Activated T-helper 1 cell treated with anti-CD3 and anti-CD28 coated beads, Interleukin-12 subunit alpha, Interleukin-12 subunit beta, Interleukin-2, Interleukin-4 antibody, amounts not matched to agents 30 ng/mL and 10 ng/mL and 1 ng/mL, durations not matched to agents 14 hours and 24 hours and 36 hours (primary cell): ENCODE measurements at regions of chr18 and their contacts with region 1.

Region 1: GRCh38 chr18:62844850-62845643 is 129.7 kb downstream of the PHLPP1 start:
- DNase-seq: no peak
- H3K4me3 Mint-ChIP-seq: peak overlapping the region; percentile 70
- H3K27ac Mint-ChIP-seq: peak overlapping the region; percentile 82
- H3K4me1 Mint-ChIP-seq: peaks cover 51% of the 10 kb centered on the region
- H3K27me3 Mint-ChIP-seq: no peaks in the 10 kb centered on the region

Region 2: DNA sequence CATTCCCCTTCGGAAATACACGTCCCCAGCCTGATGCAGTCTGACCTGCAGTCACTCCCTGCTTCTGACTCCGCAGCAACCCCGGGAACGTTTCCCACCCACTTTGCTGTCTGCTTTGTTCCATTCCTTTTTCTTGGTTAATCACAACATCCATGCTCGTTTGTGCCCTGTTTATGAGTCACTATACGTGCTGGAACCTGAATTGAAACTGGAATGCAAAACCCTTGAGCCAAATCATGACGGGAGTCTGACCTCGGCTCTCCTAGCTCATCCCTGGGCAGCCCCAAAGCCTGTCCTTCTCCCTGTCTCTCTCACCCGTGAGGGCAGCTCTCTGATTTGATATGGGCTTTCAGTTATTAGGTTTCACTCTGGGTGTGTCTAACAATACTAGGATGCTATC is 895.1 kb before region 1 on chr18:
- intact Hi-C with region 1: loop called (anchors 5 kb)
- DNase-seq: no peak
- H3K4me3 Mint-ChIP-seq: no peak overlapping the region
- H3K27ac Mint-ChIP-seq: no peak overlapping the region
- H3K4me1 Mint-ChIP-seq: peaks cover 46% of the 10 kb centered on the region
- H3K27me3 Mint-ChIP-seq: peaks cover 34% of the 10 kb centered on the region

Region 3: DNA sequence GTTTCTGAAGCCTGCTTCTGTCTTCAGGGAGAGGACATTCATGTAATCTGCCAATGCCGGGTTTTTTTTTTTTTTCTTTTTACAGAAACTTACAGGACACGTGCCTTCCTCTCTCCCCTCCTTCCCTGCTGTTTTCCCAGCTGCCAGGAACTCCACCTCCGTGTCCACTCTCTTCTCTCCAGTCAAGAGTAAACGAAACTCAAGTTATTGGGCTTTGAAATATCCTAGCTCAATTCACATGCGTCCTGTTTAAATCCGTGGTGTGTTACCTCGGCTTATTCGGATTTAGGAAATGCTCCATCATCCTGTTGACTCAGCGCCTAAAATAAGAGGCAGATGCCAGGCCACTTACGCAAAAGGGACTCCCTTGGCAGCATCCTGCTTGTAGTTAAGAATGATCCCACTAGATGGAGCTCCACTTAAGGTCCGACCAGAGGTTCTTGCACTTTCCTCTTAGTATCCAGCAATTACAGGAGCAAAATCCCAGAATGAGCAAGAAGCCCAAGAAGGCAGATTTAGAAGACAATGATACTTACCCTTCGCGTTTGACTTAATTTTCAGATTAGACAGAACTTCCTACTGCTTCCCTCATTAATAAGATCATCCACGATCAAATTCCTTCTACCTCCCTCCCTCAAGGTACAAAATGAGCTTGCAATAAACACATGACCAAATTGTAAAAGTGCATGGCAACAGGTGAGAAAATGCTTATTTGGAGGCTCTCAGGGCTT is 419.4 kb before region 1 on chr18:
- intact Hi-C with region 1: loop called (anchors 1 kb)
- DNase-seq: peak; percentile 56
- H3K4me3 Mint-ChIP-seq: peak overlapping the region; percentile 19
- H3K27ac Mint-ChIP-seq: peak overlapping the region; percentile 69
- H3K4me1 Mint-ChIP-seq: peaks cover 44% of the 10 kb centered on the region
- H3K27me3 Mint-ChIP-seq: no peaks in the 10 kb centered on the region

Region 4: DNA sequence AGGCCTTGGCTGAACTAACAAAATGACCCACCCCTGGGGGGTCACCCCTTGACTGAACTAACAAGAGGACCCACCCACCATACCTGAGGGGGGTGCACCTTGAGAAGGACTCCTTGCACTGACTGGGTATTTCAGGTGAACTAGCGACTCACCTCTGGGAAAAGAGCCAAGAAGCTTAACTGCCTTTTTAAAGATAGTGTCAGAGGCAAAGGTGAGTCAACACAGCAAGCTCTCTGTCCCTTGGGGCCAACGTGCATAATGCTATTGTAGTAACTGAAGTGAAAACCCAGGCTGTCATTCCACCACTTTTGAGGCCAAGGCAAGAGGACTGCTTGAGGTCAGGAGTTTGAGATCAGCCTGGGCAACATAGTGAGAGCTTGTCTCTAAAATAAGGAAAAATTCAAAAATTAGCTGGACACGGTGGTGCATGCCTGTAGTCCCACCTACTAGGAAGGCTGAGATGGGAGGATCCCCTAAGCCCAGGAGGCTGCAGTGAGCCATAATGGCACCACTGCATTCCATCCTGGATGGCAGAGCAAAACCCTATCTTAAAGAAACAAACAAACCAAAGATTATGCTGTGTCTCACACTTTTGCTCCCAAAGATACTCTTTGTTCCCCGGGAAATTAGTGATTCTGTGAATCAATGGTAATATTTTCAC is 358.6 kb before region 1 on chr18:
- intact Hi-C with region 1: no loop called
- DNase-seq: no peak
- H3K4me3 Mint-ChIP-seq: no peak overlapping the region
- H3K27ac Mint-ChIP-seq: no peak overlapping the region
- H3K4me1 Mint-ChIP-seq: no peaks in the 10 kb centered on the region
- H3K27me3 Mint-ChIP-seq: peaks cover 14% of the 10 kb centered on the region

Region 5: GRCh38 chr18:62868645-62869044 is 23.6 kb after region 1 on chr18:
- intact Hi-C with region 1: loop called (anchors 1 kb)
- DNase-seq: no peak
- H3K4me3 Mint-ChIP-seq: no peak overlapping the region
- H3K27ac Mint-ChIP-seq: peak overlapping the region; percentile 87
- H3K4me1 Mint-ChIP-seq: peaks cover 38% of the 10 kb centered on the region
- H3K27me3 Mint-ChIP-seq: no peaks in the 10 kb centered on the region

Region 6: GRCh38 chr18:63161761-63162195 is 316.7 kb after region 1 on chr18:
- intact Hi-C with region 1: loop called (anchors 1 kb)
- DNase-seq: peak; percentile 80
- H3K4me3 Mint-ChIP-seq: peak overlapping the region; percentile 83
- H3K27ac Mint-ChIP-seq: peak overlapping the region; percentile 99
- H3K4me1 Mint-ChIP-seq: peaks cover 92% of the 10 kb centered on the region
- H3K27me3 Mint-ChIP-seq: no peaks in the 10 kb centered on the region

Region 7: GRCh38 chr18:63422087-63422809 is 577.2 kb after region 1 on chr18 and contains the start of gene VPS4B:
- intact Hi-C with region 1: loop called (anchors 5 kb)
- DNase-seq: peak; percentile 100
- H3K4me3 Mint-ChIP-seq: peak within 1 kb of the TSS; percentile 91
- H3K27ac Mint-ChIP-seq: peak within 1 kb of the TSS; percentile 92
- H3K4me1 Mint-ChIP-seq: peaks cover 18% of the 10 kb centered on the region
- H3K27me3 Mint-ChIP-seq: no peaks in the 10 kb centered on the region
- total RNA-seq, gene VPS4B: 58.6 and 60.7 TPM in 2 replicates